CD4-positive, alpha-beta T cell (primary cell): ENCODE measurements at regions of chr2 and their contacts with region 1.

Region 1: DNA sequence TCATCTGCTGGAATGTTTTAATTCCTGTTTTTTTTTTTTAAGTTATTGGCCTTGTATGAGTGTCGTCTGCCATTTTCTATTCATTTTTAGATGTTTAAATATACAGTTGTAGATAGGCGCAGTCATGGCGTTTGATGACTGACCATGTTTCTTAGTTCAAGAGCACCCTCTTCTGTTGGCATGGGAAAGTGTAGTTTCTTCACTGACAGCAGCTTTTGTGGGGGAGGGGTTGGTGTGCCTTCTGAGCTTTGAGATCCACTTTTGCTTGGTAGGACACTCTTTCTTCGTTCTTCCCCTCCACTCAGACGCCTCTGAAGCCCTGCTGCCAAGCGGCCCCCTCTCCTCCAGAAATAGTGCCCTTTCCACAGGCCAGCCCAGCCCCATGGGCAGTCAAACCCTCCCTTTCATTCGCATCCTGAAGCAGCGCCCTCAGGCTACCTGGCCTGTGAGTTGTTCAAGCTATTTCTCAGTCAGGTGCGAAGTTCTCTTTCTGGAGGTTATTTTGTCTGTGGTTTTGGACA is 492.0 kb downstream of the TNS1 start:
- DNase-seq: peak in 7 of 14 experiments; percentile 1 to 66 (median 31)
- ATAC-seq: peak; percentile 71
- H3K4me3 ChIP-seq: no peak overlapping the region
- H3K4me3 Mint-ChIP-seq: no peak overlapping the region
- H3K27ac ChIP-seq: no peak overlapping the region
- H3K27ac Mint-ChIP-seq: no peak overlapping the region
- H3K4me1 ChIP-seq: no peaks in the 10 kb centered on the region
- H3K4me1 Mint-ChIP-seq: no peaks in the 10 kb centered on the region
- H3K27me3 ChIP-seq: no peaks in the 10 kb centered on the region
- H3K27me3 Mint-ChIP-seq: no peaks in the 10 kb centered on the region
- CTCF ChIP-seq: peak; percentile 39

Region 2: DNA sequence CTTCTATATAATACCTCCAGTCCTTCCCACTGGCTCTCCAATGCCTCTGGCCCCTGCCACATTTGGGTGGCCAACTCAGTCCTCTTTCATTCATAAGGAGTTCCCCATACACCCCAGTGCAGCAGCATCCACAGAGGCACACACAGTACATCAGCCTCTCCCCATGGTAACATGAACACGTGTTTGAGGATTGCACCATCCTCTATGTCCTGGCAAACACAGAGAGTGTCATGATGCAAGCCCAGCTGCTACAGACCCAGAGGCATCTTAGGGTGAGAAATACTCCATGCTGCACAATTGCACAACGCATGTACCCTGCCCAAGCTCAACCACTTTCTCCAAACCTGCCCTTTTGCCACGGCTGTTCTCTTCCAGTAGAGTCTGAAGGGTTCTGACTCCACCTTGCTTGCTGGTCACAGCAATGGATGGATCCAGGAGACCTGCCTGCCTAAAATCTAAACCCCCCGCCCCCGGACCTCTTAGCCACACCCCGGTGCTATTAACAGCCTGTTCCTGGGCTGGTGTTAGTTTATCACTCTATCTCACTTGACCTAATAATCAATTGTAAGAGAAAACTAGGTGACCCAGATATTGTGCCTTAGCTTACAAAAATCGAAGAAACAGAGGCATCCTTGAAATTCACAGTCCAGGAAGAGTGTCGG is 826.9 kb before region 1 on chr2:
- CTCF ChIA-PET with region 1: no interaction called
- POLR2A ChIA-PET with region 1: no interaction called
- intact Hi-C with region 1: loop called in 1 of 2 experiments (anchors 5 kb)
- DNase-seq: peak in 2 of 14 experiments; percentile 38 to 45
- ATAC-seq: no peak
- H3K4me3 ChIP-seq: no peak overlapping the region
- H3K4me3 Mint-ChIP-seq: no peak overlapping the region
- H3K27ac ChIP-seq: no peak overlapping the region
- H3K27ac Mint-ChIP-seq: no peak overlapping the region
- H3K4me1 ChIP-seq: no peaks in the 10 kb centered on the region
- H3K4me1 Mint-ChIP-seq: no peaks in the 10 kb centered on the region
- H3K27me3 ChIP-seq: peaks cover 8 to 25% of the 10 kb centered on the region in 2 experiments
- H3K27me3 Mint-ChIP-seq: peaks cover 58% of the 10 kb centered on the region
- CTCF ChIP-seq: no peak

Region 3: DNA sequence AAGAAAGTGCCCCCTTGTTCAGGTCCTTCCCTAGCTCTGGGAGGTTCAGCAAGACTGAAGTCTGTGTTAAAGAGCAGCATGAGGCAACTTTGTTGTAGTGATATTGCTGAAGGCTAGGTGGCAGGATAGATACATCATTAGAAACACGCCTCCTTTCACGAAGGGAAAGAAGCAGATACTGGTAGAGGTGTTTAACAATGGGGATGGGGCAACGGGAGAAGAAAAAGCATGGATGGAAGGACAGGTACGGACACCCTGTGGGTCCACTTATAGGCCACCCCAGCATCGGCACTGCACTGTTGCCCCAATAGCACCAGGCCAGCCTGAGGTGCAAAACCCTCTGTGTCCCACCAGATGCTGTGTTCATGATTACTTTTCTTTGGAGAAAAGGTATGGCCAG is 811.9 kb before region 1 on chr2:
- CTCF ChIA-PET with region 1: no interaction called
- POLR2A ChIA-PET with region 1: no interaction called
- intact Hi-C with region 1: loop called in 1 of 2 experiments (anchors 5 kb)
- DNase-seq: peak in 3 of 14 experiments; percentile 13 to 49 (median 38)
- ATAC-seq: peak; percentile 64
- H3K4me3 ChIP-seq: no peak overlapping the region
- H3K4me3 Mint-ChIP-seq: no peak overlapping the region
- H3K27ac ChIP-seq: no peak overlapping the region
- H3K27ac Mint-ChIP-seq: no peak overlapping the region
- H3K4me1 ChIP-seq: peaks cover 10% of the 10 kb centered on the region
- H3K4me1 Mint-ChIP-seq: peaks cover 8% of the 10 kb centered on the region
- H3K27me3 ChIP-seq: peaks cover 28 to 39% of the 10 kb centered on the region in 2 experiments
- H3K27me3 Mint-ChIP-seq: peaks cover 16% of the 10 kb centered on the region
- CTCF ChIP-seq: peak; percentile 26